Heart right ventricle (tissue), 16 donors: ENCODE measurements at regions of chr18 and their contacts with region 1.

Region 1: DNA sequence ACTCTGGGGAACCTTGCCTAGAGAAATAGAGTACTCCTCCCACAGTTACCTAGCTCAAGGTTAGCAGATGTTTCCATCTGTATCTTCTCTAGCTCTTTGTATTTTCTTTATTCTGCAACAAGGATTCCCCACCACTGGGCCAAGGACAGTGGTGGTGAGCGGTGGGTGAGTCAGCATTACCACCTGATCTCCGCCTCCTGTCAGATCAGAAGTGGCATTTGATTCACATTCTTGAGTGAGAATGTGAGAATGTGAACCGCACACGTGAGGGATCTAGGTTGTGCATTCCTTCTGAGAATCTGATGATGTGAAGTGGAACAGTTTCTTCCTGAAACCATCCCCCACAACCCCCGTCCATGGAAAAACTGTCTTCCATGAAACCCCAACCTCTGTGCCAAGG is 9.0 kb downstream of the EPB41L3 start:
- DNase-seq: no peak
- ATAC-seq: no peak
- H3K4me3 ChIP-seq: no peak overlapping the region
- H3K27ac ChIP-seq: no peak overlapping the region
- H3K4me1 ChIP-seq: peaks cover 0 to 15% (median 0%) of the 10 kb centered on the region in 9 donors
- H3K27me3 ChIP-seq: peaks cover 0 to 6% (median 0%) of the 10 kb centered on the region in 7 donors
- CTCF ChIP-seq: no peak

Region 2: GRCh38 chr18:5393779-5394178 is 141.1 kb before region 1 on chr18:
- intact Hi-C with region 1: no loop called
- DNase-seq: no peak
- ATAC-seq: no peak
- H3K4me3 ChIP-seq: no peak overlapping the region
- H3K27ac ChIP-seq: no peak overlapping the region
- H3K4me1 ChIP-seq: no peaks in the 10 kb centered on the region
- H3K27me3 ChIP-seq: no peaks in the 10 kb centered on the region
- CTCF ChIP-seq: no peak

Region 3: GRCh38 chr18:5475267-5475666 is 59.6 kb before region 1 on chr18:
- intact Hi-C with region 1: loop called in 1 of 10 experiments (anchors 10 kb)
- DNase-seq: no peak
- ATAC-seq: peak in 3 of 8 donors; percentile 47 to 62 (median 55)
- H3K4me3 ChIP-seq: no peak overlapping the region
- H3K27ac ChIP-seq: peak overlapping the region in 1 of 10 donors; percentile 32
- H3K4me1 ChIP-seq: peaks cover 0 to 28% (median 0%) of the 10 kb centered on the region in 9 donors
- H3K27me3 ChIP-seq: no peaks in the 10 kb centered on the region
- CTCF ChIP-seq: no peak

Region 4: DNA sequence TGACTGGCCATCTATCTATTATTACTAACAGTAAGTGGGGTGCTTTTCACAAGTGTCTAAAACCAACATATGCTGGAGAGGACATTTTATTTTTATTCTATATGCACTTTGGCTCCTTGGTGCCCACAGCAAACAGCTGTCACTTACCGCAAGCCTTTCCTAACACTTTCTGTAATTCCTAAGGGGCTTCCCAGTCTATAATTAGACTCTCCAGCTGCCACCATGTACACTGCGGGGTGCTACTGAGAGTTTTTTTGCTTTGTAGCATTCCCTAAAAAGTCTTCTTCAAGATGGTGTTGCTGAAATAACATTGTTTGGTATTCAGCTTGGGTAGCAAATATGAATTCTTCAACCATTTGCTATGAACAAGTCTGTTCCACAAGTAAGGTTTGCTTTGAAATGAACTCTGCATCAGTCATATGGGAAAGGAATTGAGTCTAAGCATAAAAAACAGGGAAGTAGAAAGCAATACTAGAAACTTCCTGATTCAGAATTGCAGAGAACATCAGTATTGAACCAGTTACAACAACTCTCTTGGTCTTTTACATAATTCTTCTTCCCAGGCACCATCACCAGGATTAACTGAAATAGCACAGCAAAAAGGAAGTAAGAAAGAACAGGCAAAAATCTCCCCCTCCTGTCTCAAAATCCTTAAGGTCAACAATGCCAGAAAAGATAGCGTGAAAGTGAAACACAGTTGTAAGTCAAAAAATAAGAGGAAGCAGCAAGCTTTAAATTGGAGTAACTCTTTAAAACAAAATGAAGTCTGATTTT is 19.6 kb before region 1 on chr18:
- intact Hi-C with region 1: no loop called
- DNase-seq: no peak
- ATAC-seq: peak in 7 of 8 donors; percentile 23 to 49 (median 31)
- H3K4me3 ChIP-seq: no peak overlapping the region
- H3K27ac ChIP-seq: peak overlapping the region in 4 of 10 donors; percentile 33 to 85 (median 38)
- H3K4me1 ChIP-seq: peaks cover 0 to 68% (median 7%) of the 10 kb centered on the region in 9 donors
- H3K27me3 ChIP-seq: no peaks in the 10 kb centered on the region
- CTCF ChIP-seq: no peak